ENCODE measurements at regions of chr1 and their contacts with region 1.

Region 1: GRCh38 chr1:112715264-112716053 is at the start of gene PPM1J:
- DNase-seq: peak; percentile 99
- H3K4me3 Mint-ChIP-seq: peak within 1 kb of the TSS; percentile 81
- H3K27ac Mint-ChIP-seq: no peak within 1 kb of the TSS
- H3K4me1 Mint-ChIP-seq: peaks cover 32% of the 10 kb centered on the region
- H3K27me3 Mint-ChIP-seq: peaks cover 53% of the 10 kb centered on the region
- total RNA-seq, gene PPM1J: not detected

Region 2: DNA sequence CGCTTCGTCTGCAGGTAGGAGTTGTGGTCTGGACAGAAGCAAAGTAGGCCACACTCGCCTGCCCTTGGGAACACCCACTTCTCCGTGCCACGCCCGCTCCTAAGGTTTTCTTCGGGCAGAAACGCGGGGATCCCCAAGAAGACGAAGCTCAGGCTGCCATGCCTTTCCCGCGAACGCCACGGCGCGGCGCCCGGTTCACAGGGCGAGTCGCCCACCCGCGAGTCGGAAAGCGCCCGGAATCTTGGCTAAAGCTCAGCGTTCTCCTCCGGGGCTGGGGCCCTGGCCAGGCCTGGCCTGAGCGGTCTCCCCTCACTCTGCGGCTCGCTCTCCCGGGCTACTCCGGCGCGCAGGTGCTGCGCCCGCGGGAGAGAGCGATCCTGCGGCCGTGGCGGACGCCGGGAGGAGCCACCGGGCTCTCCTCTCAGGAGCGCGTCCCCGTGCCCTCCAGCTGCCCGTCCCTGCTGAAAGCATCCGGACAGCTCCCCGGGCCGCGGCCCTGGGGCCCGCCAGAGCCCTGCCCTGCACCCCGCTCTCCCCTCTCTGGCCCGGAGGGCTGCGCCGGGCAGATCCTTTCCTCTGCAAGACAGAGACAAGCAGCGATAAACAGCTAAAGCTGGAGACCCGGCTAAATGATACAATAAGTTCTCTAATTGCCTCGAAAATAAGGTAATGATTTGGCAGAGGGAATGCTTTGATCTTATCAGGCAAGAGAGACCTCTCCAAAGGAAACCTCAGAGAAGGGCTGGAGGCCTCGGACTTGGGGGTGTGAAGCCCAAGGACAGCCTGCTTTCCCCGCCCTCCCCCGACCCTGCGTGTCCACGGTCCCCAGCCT is 213.4 kb before region 1 on chr1:
- CTCF ChIA-PET with region 1: interaction called, 10 read pairs
- POLR2A ChIA-PET with region 1: no interaction called
- DNase-seq: peak; percentile 58
- H3K4me3 Mint-ChIP-seq: peak overlapping the region; percentile 40
- H3K27ac Mint-ChIP-seq: no peak overlapping the region
- H3K4me1 Mint-ChIP-seq: peaks cover 7% of the 10 kb centered on the region
- H3K27me3 Mint-ChIP-seq: peaks cover 58% of the 10 kb centered on the region

Region 3: GRCh38 chr1:112798292-112798691 is 82.8 kb after region 1 on chr1:
- CTCF ChIA-PET with region 1: interaction called, 96 read pairs
- POLR2A ChIA-PET with region 1: no interaction called
- DNase-seq: no peak
- H3K4me3 Mint-ChIP-seq: no peak overlapping the region
- H3K27ac Mint-ChIP-seq: no peak overlapping the region
- H3K4me1 Mint-ChIP-seq: peaks cover 15% of the 10 kb centered on the region
- H3K27me3 Mint-ChIP-seq: peaks cover 2% of the 10 kb centered on the region

Region 4: GRCh38 chr1:112809253-112809684 is 93.8 kb after region 1 on chr1:
- CTCF ChIA-PET with region 1: interaction called, 96 read pairs
- POLR2A ChIA-PET with region 1: no interaction called
- DNase-seq: peak; percentile 76
- H3K4me3 Mint-ChIP-seq: no peak overlapping the region
- H3K27ac Mint-ChIP-seq: no peak overlapping the region
- H3K4me1 Mint-ChIP-seq: peaks cover 3% of the 10 kb centered on the region
- H3K27me3 Mint-ChIP-seq: peaks cover 29% of the 10 kb centered on the region

Measured in activated CD4-positive, alpha-beta memory T cell treated with anti-CD3 and anti-CD28 coated beads, Interleukin-2, amount 10 ng/mL, durations not matched to agents 7 days and 5 days (primary cell).